Posterior vena cava (tissue), 2 donors: ENCODE measurements at regions of chr6 and their contacts with region 1.

Region 1: GRCh38 chr6:159463119-159463829 is 229.8 kb downstream of the SOD2 start:
- DNase-seq: no peak

Region 2: DNA sequence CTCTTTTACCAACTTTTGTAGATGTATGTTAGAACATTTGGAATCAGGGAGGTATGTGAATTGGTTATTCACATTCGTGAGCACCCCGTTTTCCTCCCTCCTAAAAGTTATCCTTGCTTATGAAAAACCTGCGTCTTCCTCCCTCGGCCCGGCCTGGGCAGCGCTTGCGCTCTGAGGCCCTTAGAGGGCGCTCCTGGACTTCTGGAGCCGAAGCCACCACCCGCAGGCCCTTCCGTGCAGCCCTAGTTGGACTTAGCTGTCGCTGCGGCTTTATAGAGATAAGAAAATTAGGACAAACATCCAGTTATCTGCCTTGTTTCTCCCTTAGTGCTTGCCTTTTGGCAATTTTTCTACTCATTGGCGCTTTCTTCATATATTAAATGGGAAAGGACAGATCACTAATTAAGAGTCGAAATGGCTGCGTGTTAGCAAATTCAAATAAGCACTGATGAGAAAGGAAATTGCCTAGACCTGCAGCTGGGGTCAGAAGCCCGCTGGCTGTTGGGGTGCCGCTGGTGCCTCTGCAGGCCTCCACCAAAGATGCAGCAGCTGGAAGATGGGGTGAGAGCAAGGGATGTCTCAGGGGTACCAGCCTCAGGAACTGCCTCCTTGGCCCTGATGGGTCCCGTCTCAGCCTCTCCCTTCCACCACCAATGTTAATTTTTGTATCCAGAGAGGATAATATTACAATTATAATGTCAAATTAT is 288.9 kb before region 1 on chr6:
- intact Hi-C with region 1: loop called in 1 of 2 experiments (anchors 5 kb)
- DNase-seq: peak; percentile 93

Region 3: GRCh38 chr6:160431226-160431625 is 968.0 kb after region 1 on chr6:
- intact Hi-C with region 1: no loop called
- DNase-seq: peak; percentile 84